ENCODE measurements at regions of chr1 and their contacts with region 1.

Region 1: DNA sequence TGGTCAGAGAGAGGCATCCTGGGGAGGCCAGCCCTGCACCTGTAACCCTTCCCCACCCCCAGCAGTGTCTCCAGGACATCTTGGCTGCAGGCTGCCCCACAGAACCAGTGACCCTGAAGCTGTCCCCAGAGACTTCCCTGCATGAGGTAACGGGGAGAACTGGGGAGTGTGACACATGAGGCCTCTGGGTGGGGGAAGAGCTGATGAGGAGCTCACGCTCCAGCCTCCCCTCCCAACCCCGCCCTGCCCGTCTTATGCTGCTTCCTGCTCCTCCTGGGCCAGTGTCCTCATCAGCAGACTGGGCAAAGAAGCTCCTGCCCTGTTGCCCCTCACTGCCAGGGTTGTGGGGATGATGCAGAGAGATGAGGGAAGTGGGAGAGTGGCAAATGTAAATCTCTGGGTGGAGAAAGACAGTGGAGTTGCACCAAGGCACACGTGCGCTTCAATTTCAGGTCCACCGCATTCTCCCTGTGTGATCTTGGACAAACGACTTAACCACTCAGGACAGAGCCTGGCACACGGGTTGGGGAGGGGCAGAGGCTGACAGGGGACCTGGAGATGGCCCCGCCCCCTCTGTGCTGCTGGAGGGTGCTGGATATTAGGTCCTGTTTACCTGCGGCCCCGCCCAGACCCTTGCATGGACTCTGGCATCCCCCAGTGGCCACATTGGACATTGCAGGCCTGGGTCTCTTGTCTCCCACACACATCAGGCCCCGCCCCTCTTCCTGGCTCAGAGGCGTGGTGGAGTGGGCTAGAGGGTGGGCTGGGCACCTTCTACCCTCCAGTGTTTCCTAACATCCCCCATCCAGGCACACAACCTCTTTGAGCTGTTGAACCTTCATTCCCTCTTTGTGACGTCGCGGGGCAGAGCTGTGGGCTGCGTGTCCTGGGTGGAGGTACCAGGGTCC is 12.3 kb downstream of the CLCNKB start:
- DNase-seq: peak; percentile 89
- H3K4me3 ChIP-seq: no peak overlapping the region
- H3K27ac ChIP-seq: no peak overlapping the region
- H3K4me1 ChIP-seq: no peaks in the 10 kb centered on the region
- H3K27me3 ChIP-seq: no peaks in the 10 kb centered on the region
- CTCF ChIP-seq: peak; percentile 92 to 98 (median 95)
- EP300 ChIP-seq: no peak
- POLR2A ChIP-seq: no peak

Region 2: GRCh38 chr1:15799004-15799936 is 256.6 kb before region 1 on chr1:
- intact Hi-C with region 1: loop called (anchors 5 kb)
- DNase-seq: peak; percentile 82
- H3K4me3 ChIP-seq: no peak overlapping the region
- H3K27ac ChIP-seq: peak overlapping the region; percentile 64 to 75 (median 68)
- H3K4me1 ChIP-seq: peaks cover 0 to 45% (median 33%) of the 10 kb centered on the region in 4 donors
- H3K27me3 ChIP-seq: no peaks in the 10 kb centered on the region
- CTCF ChIP-seq: no peak
- EP300 ChIP-seq: peak; percentile 11 to 68 (median 28)
- POLR2A ChIP-seq: no peak

Region 3: DNA sequence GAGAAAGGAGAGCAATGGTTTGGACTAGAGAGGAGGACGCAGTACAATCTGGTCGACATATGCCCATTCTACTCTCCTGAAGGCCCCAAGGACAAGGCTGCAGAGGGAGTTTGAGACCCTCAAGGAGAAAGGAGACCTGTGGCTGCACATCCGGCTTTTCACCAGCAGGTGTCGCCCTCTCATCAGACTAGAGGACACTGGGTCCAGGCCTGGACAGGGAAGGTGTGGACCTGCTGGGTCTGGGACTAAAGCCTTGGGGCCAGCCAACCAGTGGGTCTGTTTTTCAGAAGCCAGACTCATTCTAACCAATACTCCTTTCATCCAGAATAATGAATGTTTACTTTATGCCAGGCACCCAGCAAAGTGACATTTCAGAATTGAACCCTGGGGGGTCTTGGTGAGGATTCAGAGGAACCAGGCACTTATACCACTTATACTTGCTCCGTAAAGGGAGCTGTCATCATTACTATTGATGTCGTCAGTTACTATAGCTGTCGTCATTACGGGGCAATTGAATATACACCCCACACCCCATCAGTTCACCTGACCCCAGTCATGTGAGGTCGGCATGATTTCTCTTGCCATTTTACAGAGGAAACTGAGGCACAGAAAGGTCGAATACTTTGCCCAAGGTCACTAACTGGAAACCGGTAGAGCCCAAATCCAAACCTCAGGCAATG is 46.7 kb before region 1 on chr1:
- intact Hi-C with region 1: loop called (anchors 1 kb)
- DNase-seq: peak; percentile 92
- H3K4me3 ChIP-seq: no peak overlapping the region
- H3K27ac ChIP-seq: no peak overlapping the region
- H3K4me1 ChIP-seq: peaks cover 0 to 26% (median 20%) of the 10 kb centered on the region in 4 donors
- H3K27me3 ChIP-seq: no peaks in the 10 kb centered on the region
- CTCF ChIP-seq: peak; percentile 97 to 99 (median 98)
- EP300 ChIP-seq: no peak
- POLR2A ChIP-seq: no peak

Region 4: GRCh38 chr1:16032388-16033103 is 23.3 kb before region 1 on chr1:
- intact Hi-C with region 1: loop called (anchors 1 kb)
- DNase-seq: peak; percentile 96
- H3K4me3 ChIP-seq: no peak overlapping the region
- H3K27ac ChIP-seq: no peak overlapping the region
- H3K4me1 ChIP-seq: peaks cover 0 to 13% (median 7%) of the 10 kb centered on the region in 4 donors
- H3K27me3 ChIP-seq: no peaks in the 10 kb centered on the region
- CTCF ChIP-seq: peak; percentile 99 to 100 (median 100)
- EP300 ChIP-seq: no peak
- POLR2A ChIP-seq: no peak

Measured in sigmoid colon (tissue), 7 donors.